IMR-90 (cell line): ENCODE measurements at regions of chrX and their contacts with region 1.

Region 1: GRCh38 chrX:17744896-17745523 is 7.7 kb downstream of the SCML1 start:
- DNase-seq: no peak
- ATAC-seq: no peak
- H3K4me3 ChIP-seq: no peak overlapping the region
- H3K27ac ChIP-seq: no peak overlapping the region
- H3K4me1 ChIP-seq: no peaks in the 10 kb centered on the region
- H3K27me3 ChIP-seq: no peaks in the 10 kb centered on the region
- CTCF ChIP-seq: peak; percentile 46
- POLR2A ChIP-seq: no peak
- RAD21 ChIP-seq: peak; percentile 26

Region 2: GRCh38 chrX:16882702-16883486 is 862.1 kb before region 1 on chrX:
- CTCF ChIA-PET with region 1: no interaction called
- POLR2A ChIA-PET with region 1: no interaction called
- dilution Hi-C with region 1: no loop called
- in situ Hi-C with region 1: no loop called
- intact Hi-C with region 1: no loop called
- DNase-seq: peak; percentile 64
- ATAC-seq: peak; percentile 90
- H3K4me3 ChIP-seq: peak overlapping the region; percentile 37
- H3K27ac ChIP-seq: no peak overlapping the region
- H3K4me1 ChIP-seq: 0 out of 2 replicates have a peak, but pooled peaks cover 2% of the 10 kb centered on the region
- H3K27me3 ChIP-seq: peaks cover 17% of the 10 kb centered on the region
- CTCF ChIP-seq: peak; percentile 71
- POLR2A ChIP-seq: no peak
- RAD21 ChIP-seq: peak; percentile 58

Region 3: DNA sequence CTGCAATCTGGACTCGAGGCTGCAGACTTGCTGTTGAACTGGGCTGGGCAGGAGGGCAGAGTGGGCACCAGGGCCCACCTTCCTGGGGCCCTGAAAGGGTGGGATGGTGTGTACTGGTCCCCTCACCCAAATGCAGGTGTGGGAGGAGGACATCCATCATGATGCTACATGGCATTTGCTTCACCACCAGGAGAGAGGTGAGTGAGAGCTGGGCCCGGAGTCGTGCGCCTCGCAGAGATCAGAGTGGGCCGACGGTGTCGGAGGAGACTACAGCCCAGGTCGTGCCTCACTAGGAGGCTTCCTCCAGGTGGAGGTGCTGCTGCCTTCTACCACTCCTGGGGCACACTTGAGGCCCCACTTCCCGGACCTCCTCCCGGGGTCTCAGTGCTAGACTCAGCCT is 42.5 kb after region 1 on chrX:
- CTCF ChIA-PET with region 1: no interaction called
- POLR2A ChIA-PET with region 1: no interaction called
- dilution Hi-C with region 1: no loop called
- in situ Hi-C with region 1: no loop called
- intact Hi-C with region 1: no loop called
- DNase-seq: no peak
- ATAC-seq: no peak
- H3K4me3 ChIP-seq: no peak overlapping the region
- H3K27ac ChIP-seq: no peak overlapping the region
- H3K4me1 ChIP-seq: no peaks in the 10 kb centered on the region
- H3K27me3 ChIP-seq: no peaks in the 10 kb centered on the region; the same call in 1 of the 2 replicates
- CTCF ChIP-seq: no peak
- POLR2A ChIP-seq: no peak
- RAD21 ChIP-seq: no peak

Region 4: GRCh38 chrX:18377796-18378195 is 632.8 kb after region 1 on chrX:
- CTCF ChIA-PET with region 1: no interaction called
- POLR2A ChIA-PET with region 1: no interaction called
- dilution Hi-C with region 1: no loop called
- in situ Hi-C with region 1: loop called (anchors 25 kb)
- intact Hi-C with region 1: loop called (anchors 2 kb)
- DNase-seq: peak; percentile 8
- ATAC-seq: peak; percentile 66
- H3K4me3 ChIP-seq: no peak overlapping the region
- H3K27ac ChIP-seq: no peak overlapping the region
- H3K4me1 ChIP-seq: no peaks in the 10 kb centered on the region
- H3K27me3 ChIP-seq: 0 out of 2 replicates have a peak, but pooled peaks cover under 1% of the 10 kb centered on the region
- CTCF ChIP-seq: peak; percentile 59
- POLR2A ChIP-seq: no peak
- RAD21 ChIP-seq: peak; percentile 63